ENCODE measurements at regions of chr6 and their contacts with region 1.

Region 1: DNA sequence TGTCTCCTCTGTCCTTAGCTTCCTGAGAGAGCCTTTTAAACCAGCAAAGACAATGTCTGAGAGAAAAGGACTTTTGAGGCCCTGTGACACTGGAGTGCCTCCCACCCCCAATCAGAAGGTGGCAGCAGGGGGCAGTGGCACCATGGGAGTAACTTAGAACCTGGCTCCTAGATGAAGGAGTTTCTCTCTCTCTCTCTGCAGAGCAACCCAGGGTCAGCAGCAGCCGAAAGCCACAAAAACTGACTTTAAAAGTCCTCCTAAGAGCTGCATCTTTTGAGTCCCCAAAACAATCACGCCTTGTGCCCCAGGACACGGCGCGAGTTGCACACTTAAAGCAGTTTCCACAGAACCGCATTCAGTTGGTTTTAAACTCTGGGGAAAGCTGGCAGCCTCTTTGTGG is 5.3 kb upstream of the TCP11 start:
- DNase-seq: no peak
- ATAC-seq: peak; percentile 90
- H3K4me3 ChIP-seq: no peak overlapping the region
- H3K27ac ChIP-seq: no peak overlapping the region
- H3K4me1 ChIP-seq: peaks cover 3% of the 10 kb centered on the region; the same call in 1 of the 2 replicates
- H3K27me3 ChIP-seq: no peaks in the 10 kb centered on the region
- CTCF ChIP-seq: peak; percentile 83

Region 2: GRCh38 chr6:35076997-35077712 is 69.3 kb before region 1 on chr6:
- CTCF ChIA-PET with region 1: no interaction called
- POLR2A ChIA-PET with region 1: interaction called, 15 read pairs
- in situ Hi-C with region 1: no loop called
- intact Hi-C with region 1: no loop called
- DNase-seq: no peak
- ATAC-seq: 0 out of 2 replicates have a peak, but pooled peaks have one; percentile 23
- H3K4me3 ChIP-seq: no peak overlapping the region
- H3K27ac ChIP-seq: no peak overlapping the region
- H3K4me1 ChIP-seq: no peaks in the 10 kb centered on the region
- H3K27me3 ChIP-seq: no peaks in the 10 kb centered on the region
- CTCF ChIP-seq: no peak

Region 3: GRCh38 chr6:35202066-35202546 is 55.7 kb after region 1 on chr6:
- CTCF ChIA-PET with region 1: interaction called, 21 read pairs
- POLR2A ChIA-PET with region 1: no interaction called
- in situ Hi-C with region 1: no loop called
- intact Hi-C with region 1: loop called (anchors 2 kb)
- DNase-seq: no peak
- ATAC-seq: 0 out of 2 replicates have a peak, but pooled peaks have one; percentile 43
- H3K4me3 ChIP-seq: no peak overlapping the region
- H3K27ac ChIP-seq: peak overlapping the region; percentile 15; the same call in 1 of the 2 replicates
- H3K4me1 ChIP-seq: peaks cover 14% of the 10 kb centered on the region
- H3K27me3 ChIP-seq: no peaks in the 10 kb centered on the region
- CTCF ChIP-seq: peak; percentile 37

Region 4: DNA sequence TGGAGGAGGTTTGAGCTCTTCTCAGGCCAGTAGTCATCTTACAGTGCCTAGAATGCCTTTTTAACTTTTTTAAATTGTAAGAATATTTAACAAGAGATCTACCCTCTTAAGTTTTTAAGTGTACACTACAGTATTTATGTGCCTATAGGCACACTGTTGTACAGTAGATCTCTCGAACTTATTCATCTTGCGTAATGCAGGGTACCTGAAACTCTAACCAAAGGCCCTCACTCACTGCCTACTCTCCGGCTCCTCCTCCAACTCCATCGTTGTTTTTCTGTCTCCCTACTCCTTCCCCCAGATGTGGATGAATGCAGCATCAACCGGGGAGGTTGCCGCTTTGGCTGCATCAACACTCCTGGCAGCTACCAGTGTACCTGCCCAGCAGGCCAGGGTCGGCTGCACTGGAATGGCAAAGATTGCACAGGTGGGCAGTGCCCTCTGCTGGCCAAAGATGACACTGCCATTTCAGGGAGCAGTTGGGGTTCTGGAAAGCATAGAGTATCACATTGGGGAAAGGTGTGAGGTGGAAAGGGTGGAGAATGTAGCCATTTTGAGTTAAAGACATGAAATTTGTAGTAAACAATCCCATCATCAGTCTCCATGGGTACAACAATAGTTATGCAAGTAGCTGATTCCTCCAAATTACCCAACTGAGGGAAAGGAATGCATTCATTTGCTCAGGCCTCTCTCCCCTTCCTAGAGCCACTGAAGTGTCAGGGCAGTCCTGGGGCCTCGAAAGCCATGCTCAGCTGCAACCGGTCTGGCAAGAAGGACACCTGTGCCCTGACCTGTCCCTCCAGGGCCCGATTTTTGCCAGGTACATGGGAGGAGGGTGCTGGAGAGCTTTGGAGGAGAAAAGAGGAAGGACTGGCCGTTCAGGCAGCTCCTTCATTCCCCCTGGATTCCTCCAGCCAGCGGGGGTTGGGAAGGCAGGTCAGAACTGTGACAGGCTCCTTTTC is 94.7 kb after region 1 on chr6:
- CTCF ChIA-PET with region 1: interaction called, 13 read pairs
- POLR2A ChIA-PET with region 1: no interaction called
- in situ Hi-C with region 1: no loop called
- intact Hi-C with region 1: loop called (anchors 2 kb)
- DNase-seq: no peak
- ATAC-seq: peak; percentile 92
- H3K4me3 ChIP-seq: no peak overlapping the region
- H3K27ac ChIP-seq: no peak overlapping the region
- H3K4me1 ChIP-seq: peaks cover 2% of the 10 kb centered on the region
- H3K27me3 ChIP-seq: no peaks in the 10 kb centered on the region
- CTCF ChIP-seq: peak; percentile 98